A673 (cell line): ENCODE measurements at regions of chr15 and their contacts with region 1.

Region 1: DNA sequence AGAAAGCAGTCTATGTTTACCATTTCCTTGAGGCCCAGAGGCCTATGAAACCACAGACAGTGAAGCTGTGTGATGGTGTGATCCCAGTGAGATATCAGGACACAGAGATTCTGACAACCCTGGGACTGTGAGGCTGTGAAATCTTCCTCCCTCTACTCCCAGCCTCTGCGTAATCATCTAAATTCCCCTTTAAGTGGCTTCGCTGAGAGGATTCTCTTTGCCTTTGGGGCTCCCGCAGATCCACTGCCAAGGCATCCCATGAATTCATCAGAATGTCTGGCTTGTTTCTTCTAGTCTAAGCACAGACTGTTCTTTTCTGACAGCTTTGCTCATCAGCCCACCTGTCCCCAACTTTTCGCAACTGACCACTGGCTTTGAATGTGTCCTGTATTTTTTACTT is 901.2 kb upstream of the NR2F2 start:
- DNase-seq: peak; percentile 35
- H3K4me3 ChIP-seq: no peak overlapping the region
- H3K27ac ChIP-seq: peak overlapping the region; percentile 69
- H3K4me1 ChIP-seq: peaks cover 11% of the 10 kb centered on the region
- H3K27me3 ChIP-seq: no peaks in the 10 kb centered on the region
- CTCF ChIP-seq: no peak

Region 2: GRCh38 chr15:95760501-95760900 is 331.2 kb after region 1 on chr15:
- CTCF ChIA-PET with region 1: no interaction called
- POLR2A ChIA-PET with region 1: interaction called, 15 read pairs
- intact Hi-C with region 1: no loop called
- DNase-seq: peak; percentile 2
- H3K4me3 ChIP-seq: no peak overlapping the region
- H3K27ac ChIP-seq: no peak overlapping the region
- H3K4me1 ChIP-seq: no peaks in the 10 kb centered on the region
- H3K27me3 ChIP-seq: no peaks in the 10 kb centered on the region
- CTCF ChIP-seq: no peak